Ovary (tissue), 10 donors: ENCODE measurements at regions of chr1 and their contacts with region 1.

Region 1: GRCh38 chr1:221557013-221557412 is 184.9 kb downstream of the DUSP10 start:
- DNase-seq: no peak
- H3K4me3 ChIP-seq: no peak overlapping the region
- H3K27ac ChIP-seq: no peak overlapping the region
- H3K4me1 ChIP-seq: no peaks in the 10 kb centered on the region
- H3K27me3 ChIP-seq: no peaks in the 10 kb centered on the region
- CTCF ChIP-seq: no peak
- EP300 ChIP-seq: no peak
- POLR2A ChIP-seq: no peak

Region 2: GRCh38 chr1:221381910-221382623 is 174.9 kb before region 1 on chr1:
- intact Hi-C with region 1: no loop called
- DNase-seq: no peak
- H3K4me3 ChIP-seq: no peak overlapping the region
- H3K27ac ChIP-seq: no peak overlapping the region
- H3K4me1 ChIP-seq: no peaks in the 10 kb centered on the region
- H3K27me3 ChIP-seq: no peaks in the 10 kb centered on the region
- CTCF ChIP-seq: no peak
- EP300 ChIP-seq: no peak
- POLR2A ChIP-seq: no peak

Region 3: GRCh38 chr1:221655766-221656305 is 98.8 kb after region 1 on chr1:
- intact Hi-C with region 1: loop called in 1 of 4 experiments (anchors 10 kb)
- DNase-seq: no peak
- H3K4me3 ChIP-seq: no peak overlapping the region
- H3K27ac ChIP-seq: no peak overlapping the region
- H3K4me1 ChIP-seq: no peaks in the 10 kb centered on the region
- H3K27me3 ChIP-seq: no peaks in the 10 kb centered on the region
- CTCF ChIP-seq: no peak
- EP300 ChIP-seq: no peak
- POLR2A ChIP-seq: no peak